T-cell (primary cell): ENCODE measurements at regions of chr10 and their contacts with region 1.

Region 1: GRCh38 chr10:25198151-25198550 is 23.4 kb downstream of the GPR158 start:
- DNase-seq: no peak
- ATAC-seq: no peak
- H3K4me3 ChIP-seq: no peak overlapping the region
- H3K4me3 Mint-ChIP-seq: no peak overlapping the region
- H3K27ac ChIP-seq: no peak overlapping the region
- H3K27ac Mint-ChIP-seq: no peak overlapping the region
- H3K4me1 ChIP-seq: no peaks in the 10 kb centered on the region
- H3K4me1 Mint-ChIP-seq: no peaks in the 10 kb centered on the region
- H3K27me3 ChIP-seq: no peaks in the 10 kb centered on the region
- H3K27me3 Mint-ChIP-seq: peaks cover 0 to 1% of the 10 kb centered on the region in 2 donors

Region 2: GRCh38 chr10:24091256-24091655 is 1106.9 kb before region 1 on chr10:
- CTCF ChIA-PET with region 1: no interaction called
- POLR2A ChIA-PET with region 1: no interaction called
- DNase-seq: no peak
- ATAC-seq: no peak
- H3K4me3 ChIP-seq: no peak overlapping the region
- H3K4me3 Mint-ChIP-seq: no peak overlapping the region
- H3K27ac ChIP-seq: no peak overlapping the region
- H3K27ac Mint-ChIP-seq: no peak overlapping the region
- H3K4me1 ChIP-seq: no peaks in the 10 kb centered on the region
- H3K4me1 Mint-ChIP-seq: no peaks in the 10 kb centered on the region
- H3K27me3 ChIP-seq: no peaks in the 10 kb centered on the region
- H3K27me3 Mint-ChIP-seq: no peaks in the 10 kb centered on the region

Region 3: DNA sequence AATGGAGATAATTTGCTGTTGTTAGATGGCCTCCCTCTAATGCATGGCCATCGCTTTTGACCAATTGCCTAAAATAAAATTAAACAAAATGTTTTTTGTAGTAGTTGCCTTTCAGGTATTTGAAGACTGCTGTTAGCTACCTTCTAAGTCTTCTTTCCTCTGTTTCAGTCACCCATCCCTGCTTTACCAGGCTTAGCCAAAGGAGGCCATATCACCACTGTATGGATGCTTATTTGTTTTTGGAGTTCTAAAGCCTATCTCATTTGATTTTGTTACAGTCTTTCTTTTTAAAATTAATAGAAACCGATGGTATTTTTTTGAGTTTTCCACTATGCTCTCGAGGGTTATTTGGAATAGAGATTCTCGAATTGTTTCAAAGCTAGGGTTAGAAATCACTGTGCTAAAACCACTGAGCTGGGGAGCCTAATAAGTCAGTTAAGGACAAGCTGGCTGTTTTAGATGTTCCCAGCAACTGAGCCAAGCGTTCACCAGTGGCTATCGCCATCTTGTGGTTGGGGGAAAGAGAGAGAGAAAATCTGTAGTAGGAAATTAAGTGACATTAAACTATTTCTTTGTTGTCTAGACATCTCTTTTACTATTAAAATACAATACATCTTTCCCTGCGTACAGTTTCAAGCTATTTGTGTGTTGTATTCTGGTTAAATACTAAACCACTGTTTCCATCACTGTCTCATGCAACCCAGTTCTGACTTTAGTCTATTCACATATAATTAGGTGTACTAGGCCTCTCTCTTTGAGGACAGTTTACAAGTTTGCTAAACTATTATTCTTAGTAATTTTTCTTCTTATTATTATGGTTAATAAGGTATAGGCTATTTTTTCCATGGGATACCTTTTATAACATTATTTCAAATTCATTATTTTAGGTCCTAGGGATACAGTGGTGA is 28.9 kb after region 1 on chr10:
- CTCF ChIA-PET with region 1: no interaction called
- POLR2A ChIA-PET with region 1: no interaction called
- DNase-seq: peak in 3 of 35 experiments; percentile 1 to 18 (median 2)
- ATAC-seq: no peak
- H3K4me3 ChIP-seq: no peak overlapping the region
- H3K4me3 Mint-ChIP-seq: no peak overlapping the region
- H3K27ac ChIP-seq: no peak overlapping the region
- H3K27ac Mint-ChIP-seq: no peak overlapping the region
- H3K4me1 ChIP-seq: no peaks in the 10 kb centered on the region
- H3K4me1 Mint-ChIP-seq: no peaks in the 10 kb centered on the region
- H3K27me3 ChIP-seq: no peaks in the 10 kb centered on the region
- H3K27me3 Mint-ChIP-seq: peaks cover 0 to 3% of the 10 kb centered on the region in 2 donors

Region 4: GRCh38 chr10:25912866-25913265 is 714.7 kb after region 1 on chr10:
- CTCF ChIA-PET with region 1: no interaction called
- POLR2A ChIA-PET with region 1: interaction called in 1 of 2 experiments, 13 read pairs
- DNase-seq: no peak
- ATAC-seq: no peak
- H3K4me3 ChIP-seq: no peak overlapping the region
- H3K4me3 Mint-ChIP-seq: no peak overlapping the region
- H3K27ac ChIP-seq: no peak overlapping the region
- H3K27ac Mint-ChIP-seq: no peak overlapping the region
- H3K4me1 ChIP-seq: no peaks in the 10 kb centered on the region
- H3K4me1 Mint-ChIP-seq: no peaks in the 10 kb centered on the region
- H3K27me3 ChIP-seq: peaks cover 0 to 2% of the 10 kb centered on the region in 2 experiments
- H3K27me3 Mint-ChIP-seq: peaks cover 0 to 28% of the 10 kb centered on the region in 2 donors